ENCODE measurements at regions of chr11 and their contacts with region 1.

Region 1: GRCh38 chr11:117426269-117426685 is 98.6 kb downstream of the CEP164 start:
- DNase-seq: peak; percentile 52 to 76 (median 64)
- H3K4me3 ChIP-seq: no peak overlapping the region
- H3K27ac ChIP-seq: no peak overlapping the region
- H3K4me1 ChIP-seq: no peaks in the 10 kb centered on the region
- H3K27me3 ChIP-seq: no peaks in the 10 kb centered on the region
- CTCF ChIP-seq: peak; percentile 80 to 93 (median 90)
- POLR2A ChIP-seq: no peak

Region 2: GRCh38 chr11:117807482-117808327 is 381.4 kb after region 1 on chr11:
- intact Hi-C with region 1: loop called in 1 of 2 experiments (anchors 5 kb)
- DNase-seq: peak; percentile 61 to 95 (median 86)
- H3K4me3 ChIP-seq: no peak overlapping the region
- H3K27ac ChIP-seq: no peak overlapping the region
- H3K4me1 ChIP-seq: peaks cover 0 to 3% of the 10 kb centered on the region in 2 donors
- H3K27me3 ChIP-seq: no peaks in the 10 kb centered on the region
- CTCF ChIP-seq: peak; percentile 92 to 97 (median 93)
- POLR2A ChIP-seq: no peak

Region 3: GRCh38 chr11:117817368-117818040 is 391.2 kb after region 1 on chr11:
- intact Hi-C with region 1: loop called in 1 of 2 experiments (anchors 5 kb)
- DNase-seq: peak; percentile 89 to 97 (median 89)
- H3K4me3 ChIP-seq: no peak overlapping the region
- H3K27ac ChIP-seq: peak overlapping the region in 4 of 5 donors; percentile 84 to 93 (median 89)
- H3K4me1 ChIP-seq: peaks cover 38 to 43% of the 10 kb centered on the region in 2 donors
- H3K27me3 ChIP-seq: no peaks in the 10 kb centered on the region
- CTCF ChIP-seq: peak; percentile 99 to 100 (median 100)
- POLR2A ChIP-seq: no peak